AG04449 (cell line): ENCODE measurements at regions of chr10 and their contacts with region 1.

Region 1: DNA sequence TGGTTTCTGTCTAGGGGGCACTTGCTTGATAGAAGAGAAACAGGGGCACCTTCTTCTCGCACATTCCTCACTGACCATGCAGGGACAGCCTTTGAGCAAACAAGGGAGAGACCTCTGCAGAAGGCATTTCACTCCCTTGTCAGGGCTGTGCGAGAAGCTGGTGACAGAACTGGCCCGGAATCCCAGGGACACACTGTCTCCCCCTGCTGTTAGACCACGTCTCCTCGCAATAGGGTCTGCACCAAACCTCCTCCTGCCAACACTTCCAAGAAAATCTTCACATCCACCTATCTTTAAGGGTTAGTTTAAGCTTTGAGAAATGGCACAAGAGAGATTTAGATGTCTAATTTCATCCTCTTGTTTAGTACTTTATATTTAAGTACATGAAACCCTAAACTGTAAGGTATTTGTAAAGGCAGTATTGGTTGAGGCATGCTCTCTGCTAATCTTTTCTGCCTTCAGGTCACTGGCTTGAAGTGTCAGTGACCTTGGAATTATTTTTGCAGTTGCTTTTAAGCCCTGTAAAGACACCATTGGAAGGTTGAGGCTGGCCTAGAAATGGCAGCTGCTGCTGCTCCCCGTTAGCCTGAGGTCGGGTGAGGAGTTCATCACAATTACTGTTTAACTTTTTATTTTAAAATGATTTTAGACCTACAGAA is 37.0 kb downstream of the RBM20 start:
- DNase-seq: no peak
- H3K4me3 ChIP-seq: no peak overlapping the region
- CTCF ChIP-seq: peak; percentile 64

Region 2: DNA sequence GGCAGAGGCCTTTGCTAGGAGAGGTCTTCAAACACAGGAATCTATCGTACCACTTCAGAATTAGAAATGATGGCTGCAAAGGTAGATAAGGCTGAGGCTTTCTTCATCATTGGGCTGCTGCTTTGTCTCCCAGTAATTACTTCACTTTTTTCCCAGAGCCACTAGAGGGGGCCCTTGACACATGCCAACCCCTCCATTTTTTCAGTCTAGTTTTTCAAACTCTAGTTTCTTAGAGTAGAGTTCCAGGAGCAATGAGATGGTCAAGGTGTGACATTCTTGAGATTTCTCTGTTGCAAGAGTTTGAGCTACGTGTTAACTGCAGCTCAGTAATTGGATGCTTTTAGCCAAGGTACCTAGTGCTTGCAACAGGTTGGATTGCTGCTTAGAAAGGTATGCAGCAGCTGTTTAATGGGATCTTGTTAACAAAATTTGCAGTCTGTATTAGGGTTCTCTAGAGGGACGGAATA is 70.8 kb before region 1 on chr10:
- CTCF ChIA-PET with region 1: interaction called, 28 read pairs
- POLR2A ChIA-PET with region 1: no interaction called
- DNase-seq: no peak
- H3K4me3 ChIP-seq: no peak overlapping the region
- CTCF ChIP-seq: peak; percentile 72

Region 3: GRCh38 chr10:110664483-110665420 is 16.4 kb before region 1 on chr10:
- CTCF ChIA-PET with region 1: interaction called, 178 read pairs
- POLR2A ChIA-PET with region 1: no interaction called
- DNase-seq: peak; percentile 70
- H3K4me3 ChIP-seq: no peak overlapping the region
- CTCF ChIP-seq: no peak